ENCODE measurements at regions of chr5 and their contacts with region 1.

Region 1: DNA sequence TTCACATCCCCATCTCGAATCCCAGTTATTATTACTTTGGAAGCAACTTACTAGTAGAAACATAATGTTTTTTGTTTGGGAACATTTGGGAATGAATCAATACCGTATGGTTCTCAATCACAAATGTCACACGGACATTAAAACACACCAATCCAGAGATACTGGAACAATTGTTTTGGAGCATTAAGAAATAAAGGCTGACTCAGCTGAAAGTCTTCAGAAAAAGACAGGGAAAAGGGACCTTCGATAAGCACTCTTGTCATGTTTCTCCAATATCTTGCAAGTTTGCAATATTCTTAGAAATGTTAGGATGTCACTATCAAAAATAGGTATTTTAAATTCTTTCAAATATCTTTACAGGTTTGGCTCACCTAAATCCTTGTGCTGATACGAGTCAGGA is 362.4 kb downstream of the CETN3 start:
- DNase-seq: no peak
- H3K4me3 ChIP-seq: no peak overlapping the region
- H3K27ac ChIP-seq: no peak overlapping the region
- H3K4me1 ChIP-seq: no peaks in the 10 kb centered on the region
- H3K27me3 ChIP-seq: no peaks in the 10 kb centered on the region
- CTCF ChIP-seq: no peak
- POLR2A ChIP-seq: no peak

Region 2: GRCh38 chr5:89989776-89990175 is 57.3 kb before region 1 on chr5:
- intact Hi-C with region 1: loop called (anchors 10 kb)
- DNase-seq: no peak
- H3K4me3 ChIP-seq: no peak overlapping the region
- H3K27ac ChIP-seq: peak overlapping the region in 1 of 2 donors; percentile 52
- H3K4me1 ChIP-seq: no peaks in the 10 kb centered on the region
- H3K27me3 ChIP-seq: no peaks in the 10 kb centered on the region
- CTCF ChIP-seq: no peak
- POLR2A ChIP-seq: no peak

Measured in testis (tissue), 5 donors.